CD8-positive, alpha-beta T cell (primary cell): ENCODE measurements at regions of chr15 and their contacts with region 1.

Region 1: DNA sequence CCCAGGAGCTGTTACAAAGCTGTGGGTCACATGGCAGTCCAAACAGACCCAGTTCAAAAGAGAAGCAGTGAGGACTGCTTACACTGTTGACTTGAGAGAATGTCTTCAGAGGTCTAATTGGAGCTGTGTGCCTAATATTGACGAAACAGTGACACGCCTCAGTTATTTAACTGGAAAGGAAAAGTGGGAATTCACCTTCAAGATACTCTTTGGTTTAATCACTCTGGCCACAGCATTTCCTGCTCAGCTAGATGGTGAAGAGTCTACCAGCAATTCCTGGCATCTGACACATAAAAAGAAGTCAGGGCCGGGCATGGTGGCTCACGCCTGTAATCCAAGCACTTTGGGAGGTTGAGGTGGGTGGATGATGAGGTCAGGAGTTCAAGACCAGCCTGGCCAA is 326.4 kb downstream of the SV2B start:
- DNase-seq: peak in 2 of 9 experiments; percentile 41 to 67
- ATAC-seq: no peak
- H3K4me3 ChIP-seq: no peak overlapping the region
- H3K4me3 Mint-ChIP-seq: no peak overlapping the region
- H3K27ac ChIP-seq: no peak overlapping the region
- H3K27ac Mint-ChIP-seq: no peak overlapping the region
- H3K4me1 ChIP-seq: peaks cover 12% of the 10 kb centered on the region
- H3K4me1 Mint-ChIP-seq: peaks cover 9% of the 10 kb centered on the region
- H3K27me3 ChIP-seq: no peaks in the 10 kb centered on the region
- H3K27me3 Mint-ChIP-seq: peaks cover 6% of the 10 kb centered on the region
- CTCF ChIP-seq: no peak

Region 2: GRCh38 chr15:90780916-90781315 is 645.5 kb before region 1 on chr15:
- CTCF ChIA-PET with region 1: no interaction called
- POLR2A ChIA-PET with region 1: no interaction called
- intact Hi-C with region 1: no loop called
- DNase-seq: peak in 3 of 9 experiments; percentile 8 to 22 (median 11)
- ATAC-seq: peak; percentile 40
- H3K4me3 ChIP-seq: no peak overlapping the region
- H3K4me3 Mint-ChIP-seq: peak overlapping the region; percentile 33
- H3K27ac ChIP-seq: peak overlapping the region in 1 of 2 experiments; percentile 41
- H3K27ac Mint-ChIP-seq: peak overlapping the region; percentile 41
- H3K4me1 ChIP-seq: peaks cover 12% of the 10 kb centered on the region
- H3K4me1 Mint-ChIP-seq: peaks cover 20% of the 10 kb centered on the region
- H3K27me3 ChIP-seq: no peaks in the 10 kb centered on the region
- H3K27me3 Mint-ChIP-seq: no peaks in the 10 kb centered on the region
- CTCF ChIP-seq: no peak

Region 3: GRCh38 chr15:91482795-91483194 is 56.4 kb after region 1 on chr15:
- CTCF ChIA-PET with region 1: no interaction called
- POLR2A ChIA-PET with region 1: no interaction called
- intact Hi-C with region 1: loop called in 1 of 2 experiments (anchors 10 kb)
- DNase-seq: peak in 2 of 9 experiments; percentile 36 to 42
- ATAC-seq: no peak
- H3K4me3 ChIP-seq: no peak overlapping the region
- H3K4me3 Mint-ChIP-seq: no peak overlapping the region
- H3K27ac ChIP-seq: no peak overlapping the region
- H3K27ac Mint-ChIP-seq: peak overlapping the region; percentile 66
- H3K4me1 ChIP-seq: peaks cover 43% of the 10 kb centered on the region
- H3K4me1 Mint-ChIP-seq: peaks cover 39% of the 10 kb centered on the region
- H3K27me3 ChIP-seq: no peaks in the 10 kb centered on the region
- H3K27me3 Mint-ChIP-seq: no peaks in the 10 kb centered on the region
- CTCF ChIP-seq: no peak

Region 4: DNA sequence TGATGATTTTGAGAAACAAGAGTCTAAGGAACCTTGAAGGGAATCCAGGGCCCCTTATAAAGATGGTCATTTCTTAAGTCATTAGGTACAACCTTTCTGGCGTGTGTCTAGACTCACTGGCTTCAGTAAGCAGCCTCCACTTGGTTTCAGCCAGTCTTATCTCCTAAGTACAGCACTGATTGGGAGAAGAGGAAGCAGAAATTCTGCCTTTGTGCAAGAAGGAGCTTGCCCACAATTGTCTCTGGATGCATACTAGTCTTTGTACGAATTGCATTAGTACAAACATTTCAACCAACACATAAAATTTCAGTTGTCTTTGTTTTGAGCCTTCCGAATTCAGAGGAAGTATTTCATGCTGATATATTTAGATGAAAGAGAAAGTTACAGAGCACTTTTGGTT is 566.5 kb after region 1 on chr15:
- CTCF ChIA-PET with region 1: no interaction called
- POLR2A ChIA-PET with region 1: no interaction called
- intact Hi-C with region 1: loop called in 1 of 2 experiments (anchors 5 kb)
- DNase-seq: no peak
- ATAC-seq: no peak
- H3K4me3 ChIP-seq: no peak overlapping the region
- H3K4me3 Mint-ChIP-seq: no peak overlapping the region
- H3K27ac ChIP-seq: no peak overlapping the region
- H3K27ac Mint-ChIP-seq: no peak overlapping the region
- H3K4me1 ChIP-seq: peaks cover 9% of the 10 kb centered on the region
- H3K4me1 Mint-ChIP-seq: peaks cover 18% of the 10 kb centered on the region
- H3K27me3 ChIP-seq: no peaks in the 10 kb centered on the region
- H3K27me3 Mint-ChIP-seq: no peaks in the 10 kb centered on the region
- CTCF ChIP-seq: no peak